Ovary (tissue), 10 donors: ENCODE measurements at regions of chr5 and their contacts with region 1.

Region 1: DNA sequence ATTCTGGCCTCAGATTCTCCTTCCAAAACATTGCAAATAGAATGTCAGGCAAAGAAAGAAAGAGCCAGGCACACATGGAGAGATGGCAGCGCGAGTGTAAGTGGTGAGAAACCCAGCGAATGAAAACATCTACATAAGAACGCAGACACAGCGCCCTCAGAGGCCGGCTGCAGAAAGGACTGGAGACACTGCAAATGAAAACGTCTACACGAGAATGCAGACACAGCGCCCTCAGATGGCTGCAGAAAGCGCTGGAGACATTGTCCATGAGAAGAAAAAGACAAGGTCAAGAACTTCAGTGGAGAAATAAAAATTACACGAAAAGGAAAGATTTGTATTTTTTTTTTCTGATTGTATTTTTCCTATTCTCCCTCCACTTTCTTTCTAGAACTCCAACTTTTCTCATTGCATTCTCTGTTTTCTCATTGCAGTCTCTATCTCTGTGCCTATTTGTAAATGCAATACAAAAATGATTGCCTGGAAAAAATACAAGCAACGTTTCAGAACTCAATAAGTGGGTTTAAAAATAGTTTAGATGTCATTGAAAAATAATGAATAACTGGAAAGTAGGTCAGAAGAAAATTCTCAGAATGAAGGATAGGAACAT is 117.9 kb upstream of the LPCAT1 start:
- DNase-seq: peak; percentile 51 to 81 (median 68)
- H3K4me3 ChIP-seq: no peak overlapping the region
- H3K27ac ChIP-seq: no peak overlapping the region
- H3K4me1 ChIP-seq: peaks cover 2% of the 10 kb centered on the region
- H3K27me3 ChIP-seq: no peaks in the 10 kb centered on the region
- CTCF ChIP-seq: peak in 2 of 3 donors; percentile 54 to 65
- EP300 ChIP-seq: no peak
- POLR2A ChIP-seq: no peak

Region 2: DNA sequence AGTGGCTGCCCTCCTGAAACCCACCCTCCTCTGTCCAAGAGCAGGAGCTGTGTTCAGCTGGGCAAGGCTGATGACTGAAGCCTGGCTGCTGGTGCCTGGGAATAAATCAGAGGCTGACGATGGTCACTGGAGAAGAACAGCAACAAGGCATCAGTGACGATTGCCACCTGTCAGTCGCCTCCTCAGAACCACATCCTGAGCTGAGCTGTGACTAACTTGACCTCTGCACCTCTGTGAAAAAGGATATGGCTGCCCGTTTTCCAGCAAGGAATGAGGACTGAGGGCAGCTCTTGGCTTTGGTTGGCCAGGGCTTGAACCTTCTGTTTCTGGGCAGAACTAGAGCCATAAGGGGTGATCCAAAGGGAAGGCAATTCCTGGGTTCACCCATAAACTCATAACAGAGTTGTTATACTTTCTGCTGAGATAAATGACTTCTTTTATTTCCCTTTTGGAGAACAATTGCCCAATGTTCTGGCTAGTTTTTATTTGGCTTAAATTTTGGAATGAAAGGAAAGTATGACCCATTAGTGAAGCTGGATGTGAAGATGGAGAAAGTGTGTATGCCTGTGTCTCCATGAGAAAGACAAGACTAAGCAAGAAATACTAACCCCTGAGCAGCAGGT is 708.9 kb before region 1 on chr5:
- intact Hi-C with region 1: loop called in 1 of 4 experiments (anchors 10 kb)
- DNase-seq: peak in 2 of 5 donors; percentile 8 to 16
- H3K4me3 ChIP-seq: no peak overlapping the region
- H3K27ac ChIP-seq: no peak overlapping the region
- H3K4me1 ChIP-seq: no peaks in the 10 kb centered on the region
- H3K27me3 ChIP-seq: no peaks in the 10 kb centered on the region
- CTCF ChIP-seq: no peak
- EP300 ChIP-seq: no peak
- POLR2A ChIP-seq: no peak

Region 3: GRCh38 chr5:1182633-1183423 is 458.8 kb before region 1 on chr5:
- intact Hi-C with region 1: loop called in 1 of 4 experiments (anchors 10 kb)
- DNase-seq: no peak
- H3K4me3 ChIP-seq: no peak overlapping the region
- H3K27ac ChIP-seq: no peak overlapping the region
- H3K4me1 ChIP-seq: no peaks in the 10 kb centered on the region
- H3K27me3 ChIP-seq: no peaks in the 10 kb centered on the region
- CTCF ChIP-seq: no peak
- EP300 ChIP-seq: no peak
- POLR2A ChIP-seq: no peak

Region 4: GRCh38 chr5:1479581-1480188 is 162.0 kb before region 1 on chr5:
- intact Hi-C with region 1: loop called in 1 of 4 experiments (anchors 10 kb)
- DNase-seq: peak in 4 of 5 donors; percentile 41 to 64 (median 56)
- H3K4me3 ChIP-seq: no peak overlapping the region
- H3K27ac ChIP-seq: no peak overlapping the region
- H3K4me1 ChIP-seq: no peaks in the 10 kb centered on the region
- H3K27me3 ChIP-seq: no peaks in the 10 kb centered on the region
- CTCF ChIP-seq: peak; percentile 25 to 42 (median 41)
- EP300 ChIP-seq: no peak
- POLR2A ChIP-seq: no peak

Region 5: DNA sequence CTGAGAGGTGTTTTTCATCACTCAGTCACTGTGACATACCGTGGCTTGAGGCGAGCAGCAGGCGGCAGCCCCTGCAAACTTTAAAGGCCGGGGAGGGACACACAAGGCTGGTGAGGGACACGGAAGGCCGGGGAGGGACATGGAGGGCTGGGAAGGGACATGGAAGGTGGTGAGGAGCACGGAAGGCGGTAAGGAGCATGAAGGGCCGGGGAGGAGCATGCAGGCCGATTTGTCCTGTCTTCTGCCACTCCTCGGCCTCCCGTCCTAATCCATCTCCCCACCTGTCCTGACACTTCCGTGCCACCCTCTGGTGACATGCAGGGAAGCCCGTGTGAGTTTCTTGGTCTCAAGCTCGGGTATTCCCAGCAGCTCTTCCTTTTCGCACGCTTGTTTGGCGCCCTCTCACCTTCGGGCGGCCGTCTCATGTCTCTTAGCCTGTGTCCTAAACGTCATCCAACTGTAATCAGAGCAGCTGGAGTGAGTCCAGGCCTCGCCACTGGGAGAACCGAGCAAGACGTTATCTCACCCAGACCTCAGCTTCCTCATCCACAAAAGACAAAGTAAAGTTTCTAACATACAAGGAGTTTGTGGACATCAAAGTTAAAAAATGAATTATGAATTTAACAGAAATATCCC is 31.5 kb after region 1 on chr5:
- intact Hi-C with region 1: no loop called
- DNase-seq: no peak
- H3K4me3 ChIP-seq: no peak overlapping the region
- H3K27ac ChIP-seq: no peak overlapping the region
- H3K4me1 ChIP-seq: peaks cover 4% of the 10 kb centered on the region
- H3K27me3 ChIP-seq: no peaks in the 10 kb centered on the region
- CTCF ChIP-seq: no peak
- EP300 ChIP-seq: no peak
- POLR2A ChIP-seq: no peak

Region 6: GRCh38 chr5:2805080-2805479 is 1163.4 kb after region 1 on chr5:
- intact Hi-C with region 1: no loop called
- DNase-seq: no peak
- H3K4me3 ChIP-seq: no peak overlapping the region
- H3K27ac ChIP-seq: no peak overlapping the region
- H3K4me1 ChIP-seq: no peaks in the 10 kb centered on the region
- H3K27me3 ChIP-seq: no peaks in the 10 kb centered on the region
- CTCF ChIP-seq: no peak
- EP300 ChIP-seq: no peak
- POLR2A ChIP-seq: no peak